ENCODE measurements at regions of chr3 and their contacts with region 1.

Region 1: GRCh38 chr3:138329127-138329983 is at the start of gene NME9:
- DNase-seq: peak; percentile 88
- ATAC-seq: peak; percentile 93
- H3K4me3 Mint-ChIP-seq: peak within 1 kb of the TSS; percentile 87
- H3K27ac Mint-ChIP-seq: peak within 1 kb of the TSS; percentile 81
- H3K4me1 Mint-ChIP-seq: peaks cover 25% of the 10 kb centered on the region
- H3K27me3 Mint-ChIP-seq: peaks cover 1% of the 10 kb centered on the region
- total RNA-seq, gene NME9: not detected

Region 2: DNA sequence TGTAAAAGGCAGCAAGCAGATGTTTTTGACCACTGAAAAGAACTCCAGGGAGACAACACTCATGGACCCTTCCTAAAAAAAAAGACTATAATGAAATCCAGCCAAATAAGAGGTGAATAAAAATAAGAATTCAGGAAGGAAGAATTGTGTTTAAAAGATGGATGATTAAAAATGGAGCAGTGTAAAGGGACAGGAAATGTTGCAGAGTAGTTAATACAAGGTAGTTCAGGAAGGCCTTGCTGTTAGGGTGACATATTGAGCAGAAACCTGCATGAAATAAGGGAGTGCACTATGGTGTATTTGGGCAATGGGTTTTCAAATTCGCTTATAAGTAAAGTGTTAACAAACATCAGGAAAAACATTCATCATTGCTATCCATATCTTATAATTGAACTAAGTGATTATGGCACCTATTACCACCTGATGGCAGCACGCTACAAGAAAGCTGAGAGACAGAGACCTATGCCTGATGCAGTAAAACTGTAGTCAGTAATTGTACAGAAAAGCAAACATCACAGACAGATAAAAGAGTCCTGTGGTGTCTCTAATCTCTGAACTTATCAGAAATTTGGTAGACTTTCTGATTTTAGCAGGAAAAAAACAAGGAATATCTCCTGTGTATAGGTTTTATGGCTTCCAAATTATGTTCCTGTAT is 148.9 kb before region 1 on chr3:
- CTCF ChIA-PET with region 1: interaction called, 13 read pairs
- POLR2A ChIA-PET with region 1: no interaction called
- DNase-seq: peak; percentile 60
- ATAC-seq: peak; percentile 91
- H3K4me3 Mint-ChIP-seq: no peak overlapping the region
- H3K27ac Mint-ChIP-seq: no peak overlapping the region
- H3K4me1 Mint-ChIP-seq: no peaks in the 10 kb centered on the region
- H3K27me3 Mint-ChIP-seq: peaks cover 3% of the 10 kb centered on the region

Region 3: GRCh38 chr3:138245026-138245425 is 84.3 kb before region 1 on chr3:
- CTCF ChIA-PET with region 1: no interaction called
- POLR2A ChIA-PET with region 1: no interaction called
- DNase-seq: no peak
- ATAC-seq: no peak
- H3K4me3 Mint-ChIP-seq: no peak overlapping the region
- H3K27ac Mint-ChIP-seq: no peak overlapping the region
- H3K4me1 Mint-ChIP-seq: no peaks in the 10 kb centered on the region
- H3K27me3 Mint-ChIP-seq: no peaks in the 10 kb centered on the region